ENCODE measurements at regions of chr2 and their contacts with region 1.

Region 1: GRCh38 chr2:218852911-218853667 is 6.5 kb upstream of the WNT6 start:
- DNase-seq: peak; percentile 21 to 60 (median 56)
- ATAC-seq: peak; percentile 87
- H3K4me3 ChIP-seq: no peak overlapping the region
- H3K4me3 Mint-ChIP-seq: no peak overlapping the region
- H3K27ac ChIP-seq: no peak overlapping the region
- H3K27ac Mint-ChIP-seq: peak overlapping the region in 1 of 9 donors; percentile 24
- H3K4me1 ChIP-seq: no peaks in the 10 kb centered on the region
- H3K4me1 Mint-ChIP-seq: peaks cover 0 to 10% (median under 1%) of the 10 kb centered on the region in 7 donors
- H3K27me3 ChIP-seq: peaks cover 9% of the 10 kb centered on the region in 2 donors
- H3K27me3 Mint-ChIP-seq: peaks cover 59 to 71% (median 65%) of the 10 kb centered on the region in 5 donors

Region 2: DNA sequence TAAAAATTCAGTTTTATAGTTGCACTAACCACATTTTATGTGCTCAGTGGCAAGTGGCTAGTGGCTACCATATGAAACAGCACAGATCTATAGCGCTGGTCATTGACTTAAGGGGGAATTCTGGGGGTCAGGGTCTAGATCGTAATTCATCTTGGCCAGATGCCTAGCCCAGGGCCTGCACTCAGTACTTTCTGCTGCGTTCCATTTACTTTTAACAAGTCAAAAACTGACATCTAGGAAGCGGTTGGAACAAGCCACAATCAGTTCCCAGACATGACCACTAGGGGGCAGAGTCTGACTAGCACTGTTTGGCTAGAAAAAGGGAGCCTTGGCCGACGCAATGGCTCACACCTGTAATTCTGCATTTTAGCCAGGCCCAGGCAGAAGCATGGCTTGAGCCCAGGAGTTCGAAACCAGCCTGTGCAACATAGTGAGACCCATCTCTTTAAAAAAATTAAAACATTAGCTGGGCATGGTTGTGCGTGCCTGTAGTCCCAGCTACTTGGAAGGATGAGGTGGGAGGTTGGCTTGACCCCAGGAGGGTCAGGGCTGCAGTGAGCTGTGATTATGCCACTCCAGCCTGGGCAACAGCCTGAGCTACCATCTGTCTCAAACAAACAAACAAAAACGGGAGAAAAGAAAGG is 551.8 kb before region 1 on chr2:
- CTCF ChIA-PET with region 1: no interaction called
- POLR2A ChIA-PET with region 1: no interaction called
- intact Hi-C with region 1: loop called in 1 of 2 experiments (anchors 10 kb)
- DNase-seq: peak; percentile 61 to 92 (median 84)
- ATAC-seq: peak; percentile 99
- H3K4me3 ChIP-seq: no peak overlapping the region
- H3K4me3 Mint-ChIP-seq: no peak overlapping the region
- H3K27ac ChIP-seq: no peak overlapping the region
- H3K27ac Mint-ChIP-seq: peak overlapping the region in 8 of 9 donors; percentile 34 to 80 (median 64)
- H3K4me1 ChIP-seq: no peaks in the 10 kb centered on the region
- H3K4me1 Mint-ChIP-seq: peaks cover 3 to 8% (median 7%) of the 10 kb centered on the region in 7 donors
- H3K27me3 ChIP-seq: no peaks in the 10 kb centered on the region
- H3K27me3 Mint-ChIP-seq: peaks cover 0 to 4% (median 0%) of the 10 kb centered on the region in 5 donors

Region 3: DNA sequence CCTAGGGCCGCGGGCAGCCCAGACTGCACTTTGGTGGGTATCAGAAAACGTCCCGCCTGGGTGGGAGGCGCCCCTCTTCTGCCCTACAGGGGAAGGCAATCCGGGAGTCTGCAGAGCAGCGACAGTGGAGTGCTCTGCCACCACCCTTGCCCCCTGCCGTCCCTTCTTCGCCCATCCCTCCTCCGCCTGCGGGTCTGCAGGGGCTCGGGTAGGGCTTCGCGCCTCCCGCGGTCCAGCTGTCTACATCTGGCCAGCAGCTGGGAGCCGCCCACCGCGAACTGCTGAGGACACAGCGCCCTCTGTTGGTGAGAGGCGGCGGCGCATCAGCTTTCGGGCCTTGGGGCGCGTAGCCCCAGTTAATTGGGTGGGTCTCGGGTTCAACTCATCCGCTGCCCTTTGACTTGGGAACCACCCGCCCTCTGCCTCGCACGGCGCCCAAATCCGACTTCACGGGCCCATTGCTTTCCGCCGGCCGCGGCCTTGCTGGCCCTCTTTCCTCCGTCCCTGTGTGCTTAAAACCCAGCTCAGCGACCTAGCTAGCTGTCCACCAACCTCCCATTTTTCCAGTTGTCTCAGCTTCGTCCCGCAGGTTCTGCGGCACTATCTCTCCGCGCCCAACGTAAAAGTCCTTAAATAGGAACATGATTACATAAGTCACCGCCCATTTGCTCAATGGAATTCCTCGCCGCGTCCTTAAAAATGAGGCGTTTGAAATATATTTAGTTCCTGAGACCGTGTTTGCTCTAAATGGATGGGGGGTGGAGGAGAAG is 45.2 kb after region 1 on chr2:
- CTCF ChIA-PET with region 1: interaction called, 39 read pairs
- POLR2A ChIA-PET with region 1: interaction called, 7 read pairs
- intact Hi-C with region 1: loop called (anchors 1 kb)
- DNase-seq: peak; percentile 50 to 88 (median 72)
- ATAC-seq: peak; percentile 42
- H3K4me3 ChIP-seq: peak overlapping the region; percentile 65
- H3K4me3 Mint-ChIP-seq: peak overlapping the region; percentile 53 to 87 (median 82)
- H3K27ac ChIP-seq: no peak overlapping the region
- H3K27ac Mint-ChIP-seq: peak overlapping the region in 7 of 9 donors; percentile 33 to 92 (median 71)
- H3K4me1 ChIP-seq: peaks cover 40 to 49% of the 10 kb centered on the region in 2 donors
- H3K4me1 Mint-ChIP-seq: peaks cover 38 to 48% (median 42%) of the 10 kb centered on the region in 7 donors
- H3K27me3 ChIP-seq: peaks cover 0 to 3% of the 10 kb centered on the region in 2 donors
- H3K27me3 Mint-ChIP-seq: peaks cover 20 to 75% (median 40%) of the 10 kb centered on the region in 5 donors

Region 4: DNA sequence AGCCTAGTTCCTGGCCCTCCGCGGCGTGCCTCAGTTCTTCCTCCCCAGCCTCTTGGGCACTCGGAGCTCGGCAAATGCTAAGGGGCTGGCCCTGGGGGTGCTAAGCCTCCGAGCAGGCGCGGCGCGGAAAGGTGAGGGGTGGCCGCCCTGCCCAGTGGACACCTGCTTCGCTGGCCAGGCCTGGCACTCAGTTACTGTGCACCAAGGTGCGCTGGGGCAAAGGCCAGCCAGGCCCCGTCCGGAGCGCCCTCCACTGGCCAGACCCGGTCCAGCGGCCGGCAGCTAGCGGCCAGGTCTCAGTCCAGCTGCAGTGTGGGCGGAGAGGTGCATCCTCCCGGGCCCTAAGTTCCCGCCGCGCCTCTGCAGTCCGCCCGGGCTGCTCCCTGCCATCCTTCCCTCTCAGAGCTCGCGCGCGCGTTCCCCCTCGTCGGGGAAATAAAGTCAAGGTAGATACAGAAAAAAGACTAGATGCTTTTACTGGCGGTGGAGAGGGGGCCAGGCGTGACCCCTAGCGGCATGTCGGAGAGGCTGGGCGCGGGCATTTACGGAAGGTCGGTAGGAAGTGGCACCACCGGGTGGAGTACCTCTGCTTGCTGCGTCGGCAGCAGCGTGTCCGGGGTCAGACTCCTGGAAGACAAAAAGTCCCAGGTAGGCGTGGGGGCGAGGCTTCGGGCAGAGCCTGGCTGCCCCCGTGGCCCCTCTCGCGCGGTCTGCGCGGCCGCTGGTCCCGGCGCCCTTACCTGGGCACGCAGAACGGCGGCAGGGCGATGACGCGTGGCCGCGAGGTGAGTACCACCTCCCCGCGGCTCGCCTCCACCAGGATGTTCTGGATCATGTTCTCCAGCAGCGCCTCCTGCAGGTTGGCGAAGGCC is 149.5 kb after region 1 on chr2:
- CTCF ChIA-PET with region 1: no interaction called
- POLR2A ChIA-PET with region 1: no interaction called
- intact Hi-C with region 1: loop called in 1 of 2 experiments (anchors 2 kb)
- DNase-seq: peak in 4 of 9 donors; percentile 33 to 40 (median 39)
- ATAC-seq: peak; percentile 61
- H3K4me3 ChIP-seq: peak overlapping the region; percentile 33
- H3K4me3 Mint-ChIP-seq: peak overlapping the region; percentile 14 to 85 (median 78)
- H3K27ac ChIP-seq: no peak overlapping the region
- H3K27ac Mint-ChIP-seq: no peak overlapping the region
- H3K4me1 ChIP-seq: peaks cover 12 to 13% of the 10 kb centered on the region in 2 donors
- H3K4me1 Mint-ChIP-seq: peaks cover 0 to 17% (median 13%) of the 10 kb centered on the region in 7 donors
- H3K27me3 ChIP-seq: peaks cover 0 to 24% of the 10 kb centered on the region in 2 donors
- H3K27me3 Mint-ChIP-seq: peaks cover 55 to 72% (median 69%) of the 10 kb centered on the region in 5 donors

Region 5: GRCh38 chr2:219119422-219120043 is 266.4 kb after region 1 on chr2:
- CTCF ChIA-PET with region 1: no interaction called
- POLR2A ChIA-PET with region 1: no interaction called
- intact Hi-C with region 1: loop called in 1 of 2 experiments (anchors 1 kb)
- DNase-seq: peak; percentile 14 to 50 (median 34)
- ATAC-seq: peak; percentile 66
- H3K4me3 ChIP-seq: no peak overlapping the region
- H3K4me3 Mint-ChIP-seq: no peak overlapping the region
- H3K27ac ChIP-seq: no peak overlapping the region
- H3K27ac Mint-ChIP-seq: no peak overlapping the region
- H3K4me1 ChIP-seq: peaks cover 0 to 7% of the 10 kb centered on the region in 2 donors
- H3K4me1 Mint-ChIP-seq: peaks cover 4 to 22% (median 11%) of the 10 kb centered on the region in 7 donors
- H3K27me3 ChIP-seq: no peaks in the 10 kb centered on the region
- H3K27me3 Mint-ChIP-seq: no peaks in the 10 kb centered on the region

Region 6: GRCh38 chr2:219163156-219163555 is 310.1 kb after region 1 on chr2:
- CTCF ChIA-PET with region 1: no interaction called
- POLR2A ChIA-PET with region 1: no interaction called
- intact Hi-C with region 1: no loop called
- DNase-seq: no peak
- ATAC-seq: no peak
- H3K4me3 ChIP-seq: no peak overlapping the region
- H3K4me3 Mint-ChIP-seq: no peak overlapping the region
- H3K27ac ChIP-seq: no peak overlapping the region
- H3K27ac Mint-ChIP-seq: peak overlapping the region in 1 of 9 donors; percentile 52
- H3K4me1 ChIP-seq: peaks cover 11 to 12% of the 10 kb centered on the region in 2 donors
- H3K4me1 Mint-ChIP-seq: peaks cover 15 to 33% (median 24%) of the 10 kb centered on the region in 7 donors
- H3K27me3 ChIP-seq: no peaks in the 10 kb centered on the region
- H3K27me3 Mint-ChIP-seq: no peaks in the 10 kb centered on the region

Measured in naive thymus-derived CD4-positive, alpha-beta T cell (primary cell).